AG04450 (cell line): ENCODE measurements at regions of chr15 and their contacts with region 1.

Region 1: DNA sequence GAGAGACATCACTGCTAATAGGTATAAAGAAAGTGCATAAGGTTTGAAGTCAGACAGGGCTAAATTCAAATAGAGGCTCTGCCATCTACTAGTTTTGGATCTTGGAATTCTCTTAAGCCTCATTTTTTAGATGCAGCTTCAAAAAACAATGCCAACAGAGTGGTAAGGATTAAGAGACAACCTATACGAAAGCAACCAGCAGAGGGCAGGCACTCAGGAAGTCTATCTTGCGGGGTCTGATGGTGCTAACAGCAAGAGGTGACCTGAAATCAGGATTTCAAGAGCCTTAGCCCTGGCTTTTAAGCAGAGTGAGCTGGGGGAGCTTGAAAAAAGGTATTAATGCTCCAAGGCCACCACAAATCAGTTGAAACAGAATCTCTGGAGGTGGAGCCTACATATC is 40.7 kb downstream of the LDHAL6B start:
- DNase-seq: peak; percentile 50
- H3K4me3 ChIP-seq: no peak overlapping the region
- H3K27ac ChIP-seq: no peak overlapping the region
- H3K27me3 ChIP-seq: no peaks in the 10 kb centered on the region
- CTCF ChIP-seq: peak; percentile 76

Region 2: DNA sequence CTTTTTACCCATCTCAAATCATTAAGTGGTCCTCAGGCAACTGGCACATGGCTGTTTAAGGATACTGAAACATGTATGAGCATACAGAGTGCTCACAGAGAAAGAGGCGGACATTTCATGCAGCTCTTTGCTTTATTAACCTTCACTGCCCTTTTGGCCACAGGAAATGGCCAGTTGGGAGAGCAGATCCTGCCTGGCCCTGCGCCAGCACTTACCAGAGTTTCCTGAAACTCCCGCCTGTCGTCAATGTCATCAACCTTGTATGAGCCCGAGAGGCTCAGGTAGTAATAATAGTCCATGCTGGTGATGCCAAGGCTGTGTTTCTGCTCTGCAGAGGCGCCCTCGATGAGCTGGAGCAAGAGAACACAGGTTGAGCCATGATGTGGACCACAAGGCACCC is 22.9 kb before region 1 on chr15:
- CTCF ChIA-PET with region 1: interaction called, 17 read pairs
- POLR2A ChIA-PET with region 1: no interaction called
- DNase-seq: no peak
- H3K4me3 ChIP-seq: no peak overlapping the region
- H3K27ac ChIP-seq: no peak overlapping the region
- H3K27me3 ChIP-seq: no peaks in the 10 kb centered on the region
- CTCF ChIP-seq: no peak

Region 3: GRCh38 chr15:59237119-59237855 is 10.1 kb before region 1 on chr15:
- CTCF ChIA-PET with region 1: interaction called, 22 read pairs
- POLR2A ChIA-PET with region 1: no interaction called
- DNase-seq: no peak
- H3K4me3 ChIP-seq: no peak overlapping the region
- H3K27ac ChIP-seq: no peak overlapping the region
- H3K27me3 ChIP-seq: no peaks in the 10 kb centered on the region
- CTCF ChIP-seq: no peak

Region 4: GRCh38 chr15:59299929-59300617 is 52.7 kb after region 1 on chr15:
- CTCF ChIA-PET with region 1: interaction called, 13 read pairs
- POLR2A ChIA-PET with region 1: no interaction called
- DNase-seq: peak; percentile 87
- H3K4me3 ChIP-seq: no peak overlapping the region; the same call in 1 of the 2 replicates
- H3K27ac ChIP-seq: peak overlapping the region; percentile 62
- H3K27me3 ChIP-seq: no peaks in the 10 kb centered on the region
- CTCF ChIP-seq: no peak

Region 5: DNA sequence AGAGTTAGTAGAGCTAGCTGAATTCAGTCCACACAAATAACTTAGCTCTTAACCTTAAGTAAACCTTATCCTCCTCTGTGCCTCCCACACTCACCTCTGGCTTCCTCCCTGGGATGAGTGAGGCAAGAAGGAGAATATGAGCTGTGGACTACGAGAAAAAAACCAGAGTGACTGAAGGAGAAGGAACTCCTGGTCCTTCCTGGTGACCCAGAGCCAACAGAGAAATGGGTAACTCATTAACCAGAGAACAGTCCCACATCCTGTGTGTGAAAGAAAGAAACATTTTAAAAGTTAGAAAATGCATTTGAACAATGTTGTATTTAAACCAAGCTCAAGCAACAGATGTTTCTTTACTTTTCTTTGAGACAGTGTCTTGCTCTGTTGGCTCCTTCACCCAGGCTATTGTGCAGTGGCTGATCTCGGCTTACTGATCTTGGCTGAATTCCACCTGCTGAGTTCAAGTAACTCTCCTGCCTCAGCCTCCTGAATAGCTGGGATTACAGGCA is 163.1 kb after region 1 on chr15:
- CTCF ChIA-PET with region 1: interaction called, 15 read pairs
- POLR2A ChIA-PET with region 1: no interaction called
- DNase-seq: no peak
- H3K4me3 ChIP-seq: no peak overlapping the region
- H3K27ac ChIP-seq: peak overlapping the region; percentile 11
- H3K27me3 ChIP-seq: peaks cover 5% of the 10 kb centered on the region
- CTCF ChIP-seq: no peak